ENCODE measurements at regions of chr2 and their contacts with region 1.

Region 1: GRCh38 chr2:234231460-234231859 is 181.0 kb downstream of the SPP2 start:
- DNase-seq: no peak
- H3K4me3 ChIP-seq: no peak overlapping the region
- H3K27ac ChIP-seq: no peak overlapping the region
- H3K4me1 ChIP-seq: no peaks in the 10 kb centered on the region
- H3K27me3 ChIP-seq: no peaks in the 10 kb centered on the region
- CTCF ChIP-seq: no peak
- POLR2A ChIP-seq: no peak

Region 2: GRCh38 chr2:234211797-234212196 is 19.7 kb before region 1 on chr2:
- CTCF ChIA-PET with region 1: interaction called, 4 read pairs
- POLR2A ChIA-PET with region 1: no interaction called
- dilution Hi-C with region 1: no loop called
- intact Hi-C with region 1: loop called (anchors 2 kb)
- DNase-seq: peak; percentile 11
- H3K4me3 ChIP-seq: no peak overlapping the region
- H3K27ac ChIP-seq: no peak overlapping the region
- H3K4me1 ChIP-seq: no peaks in the 10 kb centered on the region
- H3K27me3 ChIP-seq: no peaks in the 10 kb centered on the region
- CTCF ChIP-seq: no peak
- POLR2A ChIP-seq: no peak